HEK293 (cell line): ENCODE measurements at regions of chr15 and their contacts with region 1.

Region 1: DNA sequence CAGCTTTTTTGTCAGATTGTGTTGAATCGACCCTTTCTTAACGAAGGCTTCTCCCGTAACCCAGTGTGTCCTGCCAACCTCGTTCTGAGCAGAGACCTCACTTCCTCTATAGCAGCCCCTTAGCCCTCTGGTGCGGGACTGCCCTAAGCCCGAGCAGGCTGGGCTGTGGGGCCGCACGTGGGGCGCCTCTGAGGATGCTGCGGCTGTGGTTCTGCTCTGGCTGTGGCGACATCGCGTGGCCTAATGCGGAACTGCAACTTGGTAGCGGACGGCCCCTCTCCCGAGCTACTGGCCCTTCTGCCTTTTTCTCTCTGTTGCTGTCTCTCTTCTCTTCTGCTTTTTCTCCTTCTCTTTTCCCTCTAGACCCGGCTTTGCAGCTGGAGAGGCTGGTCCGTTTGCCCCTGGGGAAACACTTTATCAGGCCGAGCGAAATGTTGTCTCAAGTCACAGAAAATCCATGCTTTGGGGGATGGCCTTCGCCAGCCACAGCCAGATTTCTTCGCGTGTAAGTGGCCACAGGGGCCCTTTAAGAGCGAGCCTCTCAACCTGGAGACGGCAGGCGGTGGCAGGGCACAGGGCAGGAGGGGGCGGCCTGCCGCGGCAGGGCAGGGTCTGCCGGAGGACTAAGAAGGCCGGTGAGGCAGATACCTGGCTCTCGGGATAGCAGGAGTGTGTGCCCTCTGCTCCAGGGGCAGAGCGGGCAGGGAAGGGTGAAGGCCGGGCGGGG is 19.4 kb upstream of the KIF23 start:
- H3K4me3 ChIP-seq: no peak overlapping the region
- H3K27ac ChIP-seq: no peak overlapping the region
- H3K4me1 ChIP-seq: no peaks in the 10 kb centered on the region; the same call in 1 of the 2 replicates
- CTCF ChIP-seq: peak; percentile 97

Region 2: GRCh38 chr15:69265347-69265955 is 129.3 kb before region 1 on chr15:
- CTCF ChIA-PET with region 1: interaction called, 11 read pairs
- POLR2A ChIA-PET with region 1: no interaction called
- H3K4me3 ChIP-seq: no peak overlapping the region
- H3K27ac ChIP-seq: no peak overlapping the region
- H3K4me1 ChIP-seq: no peaks in the 10 kb centered on the region
- CTCF ChIP-seq: peak; percentile 58; the same call in 1 of the 2 replicates

Region 3: DNA sequence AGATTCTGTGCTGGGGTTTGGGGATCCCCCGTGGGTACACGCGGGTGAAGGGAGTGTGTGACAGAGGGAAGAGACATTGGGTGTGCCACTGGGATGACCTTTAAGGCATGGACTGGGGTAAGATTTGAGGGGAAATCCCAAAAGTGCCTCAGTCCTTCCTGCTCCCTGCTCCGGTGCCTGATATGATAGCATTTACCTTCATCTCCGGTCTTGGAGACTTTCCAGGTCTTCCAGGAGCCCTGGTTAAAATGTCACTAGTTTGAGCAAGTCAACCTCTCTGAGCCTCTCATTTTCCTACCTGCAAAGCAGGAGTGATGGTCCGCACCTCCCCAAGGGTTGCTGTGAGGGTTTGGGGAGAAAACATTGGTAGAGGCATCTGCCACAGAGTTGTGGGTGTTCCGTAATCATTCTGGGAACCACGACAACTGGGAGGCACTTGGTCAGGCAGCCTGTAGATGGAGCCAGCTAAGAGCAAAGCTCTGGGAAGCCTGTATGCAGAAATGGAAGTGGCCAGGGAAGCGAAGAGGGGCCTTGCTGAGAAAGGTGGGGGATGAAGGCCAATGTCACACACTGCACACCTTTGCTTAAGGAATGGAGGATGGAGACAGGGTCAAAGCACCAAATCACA is 14.5 kb before region 1 on chr15:
- CTCF ChIA-PET with region 1: interaction called, 14 read pairs
- POLR2A ChIA-PET with region 1: no interaction called
- H3K4me3 ChIP-seq: no peak overlapping the region
- H3K27ac ChIP-seq: no peak overlapping the region
- H3K4me1 ChIP-seq: no peaks in the 10 kb centered on the region
- CTCF ChIP-seq: peak; percentile 31

Region 4: GRCh38 chr15:69509131-69509530 is 114.4 kb after region 1 on chr15:
- CTCF ChIA-PET with region 1: no interaction called
- POLR2A ChIA-PET with region 1: no interaction called
- H3K4me3 ChIP-seq: no peak overlapping the region
- H3K27ac ChIP-seq: no peak overlapping the region
- H3K4me1 ChIP-seq: no peaks in the 10 kb centered on the region
- CTCF ChIP-seq: no peak

Region 5: GRCh38 chr15:69697916-69698315 is 303.2 kb after region 1 on chr15:
- CTCF ChIA-PET with region 1: no interaction called
- POLR2A ChIA-PET with region 1: no interaction called
- H3K4me3 ChIP-seq: no peak overlapping the region
- H3K27ac ChIP-seq: no peak overlapping the region
- H3K4me1 ChIP-seq: no peaks in the 10 kb centered on the region
- CTCF ChIP-seq: no peak